ENCODE measurements at regions of chr3 and their contacts with region 1.

Region 1: DNA sequence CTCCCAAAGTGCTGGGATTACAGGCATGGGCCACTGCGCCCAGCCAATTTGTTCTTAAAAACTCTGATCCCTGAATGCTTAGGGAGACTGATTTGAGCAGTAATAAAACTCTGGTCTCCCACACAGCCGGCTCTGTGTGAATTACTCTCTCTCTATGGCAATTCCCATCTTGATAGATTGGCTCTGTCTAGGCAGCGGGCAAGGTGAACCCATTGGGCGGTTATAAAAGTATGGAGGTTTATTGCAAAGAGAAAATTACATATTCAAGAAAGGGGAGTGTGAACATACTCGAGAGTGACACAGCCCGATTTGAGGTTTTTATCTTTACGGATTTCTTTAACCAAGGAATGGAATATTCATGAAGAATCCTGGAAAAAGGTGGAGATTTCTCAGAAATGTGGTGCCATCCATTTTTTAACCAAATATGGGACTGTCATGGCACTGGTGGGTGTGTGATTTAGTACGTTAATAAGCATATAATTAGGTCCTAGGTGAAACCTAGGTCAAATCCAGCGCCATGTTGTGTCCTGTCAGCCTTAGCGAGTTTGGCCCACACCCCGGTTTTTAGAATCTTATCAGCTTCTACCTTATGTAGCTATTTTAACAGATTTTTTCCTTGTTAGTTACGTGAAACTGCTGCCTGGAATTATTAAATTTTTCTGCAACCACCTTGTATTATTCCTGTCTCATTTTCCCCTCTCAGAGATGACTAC is 7.2 kb upstream of the GMPS start:
- DNase-seq: no peak
- ATAC-seq: peak in 1 of 2 donors; percentile 16
- H3K4me3 Mint-ChIP-seq: peak overlapping the region in 2 of 10 donors; percentile 22 to 56
- H3K27ac Mint-ChIP-seq: peak overlapping the region in 7 of 10 donors; percentile 62 to 90 (median 75)
- H3K4me1 Mint-ChIP-seq: peaks cover 0 to 18% (median 11%) of the 10 kb centered on the region in 4 donors
- H3K27me3 Mint-ChIP-seq: no peaks in the 10 kb centered on the region

Region 2: GRCh38 chr3:155805802-155806618 is 57.2 kb before region 1 on chr3 and contains the start of gene C3orf33:
- POLR2A ChIA-PET with region 1: interaction called, 11 read pairs
- DNase-seq: peak; percentile 64 to 84 (median 78)
- ATAC-seq: peak; percentile 96 to 97
- H3K4me3 Mint-ChIP-seq: peak within 1 kb of the TSS; percentile 84 to 95 (median 90)
- H3K27ac Mint-ChIP-seq: peak within 1 kb of the TSS; percentile 27 to 93 (median 91)
- H3K4me1 Mint-ChIP-seq: peaks cover 7 to 26% (median 18%) of the 10 kb centered on the region in 4 donors
- H3K27me3 Mint-ChIP-seq: peaks cover 7 to 11% (median 8%) of the 10 kb centered on the region in 5 donors
- polyA plus RNA-seq, gene C3orf33: 3.2 to 5.6 (median 4.4) TPM

Region 3: GRCh38 chr3:155934230-155934629 is 71.0 kb after region 1 on chr3:
- POLR2A ChIA-PET with region 1: no interaction called
- DNase-seq: no peak
- ATAC-seq: no peak
- H3K4me3 Mint-ChIP-seq: no peak overlapping the region
- H3K27ac Mint-ChIP-seq: no peak overlapping the region
- H3K4me1 Mint-ChIP-seq: no peaks in the 10 kb centered on the region
- H3K27me3 Mint-ChIP-seq: no peaks in the 10 kb centered on the region

Measured in naive thymus-derived CD8-positive, alpha-beta T cell (primary cell).